Testis (tissue), 5 donors: ENCODE measurements at regions of chr6 and their contacts with region 1.

Region 1: DNA sequence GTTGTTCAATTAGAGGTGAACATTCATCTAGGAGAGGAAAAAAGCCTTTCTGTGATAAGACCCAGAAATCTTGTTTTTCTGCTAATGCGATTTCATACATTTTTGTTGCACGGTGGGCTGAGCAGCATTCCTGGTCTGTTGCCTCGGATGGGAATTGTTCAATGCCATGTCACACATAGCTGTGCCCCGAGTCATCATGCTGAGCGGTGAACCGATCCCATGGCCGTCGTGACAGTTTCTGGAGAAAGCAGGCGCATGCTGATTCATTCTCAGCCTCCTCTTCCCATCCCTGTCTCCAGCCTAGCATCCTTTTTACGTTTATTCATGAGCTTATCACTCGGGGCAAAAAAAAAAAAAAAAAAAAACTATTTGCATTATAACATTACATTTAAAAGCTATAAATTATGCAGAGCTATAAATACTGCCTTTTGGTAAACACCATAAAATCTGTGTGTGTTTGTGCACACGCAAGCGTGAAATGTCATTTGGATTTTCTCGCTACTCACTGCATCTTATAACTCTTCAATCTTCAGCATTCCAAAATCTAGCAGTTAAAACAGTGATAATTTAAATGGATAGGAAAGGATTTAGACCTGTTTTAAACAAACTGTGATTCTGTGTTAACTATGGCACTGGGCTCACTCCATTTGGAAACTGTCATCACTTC is 58.9 kb upstream of the IFNGR1 start:
- DNase-seq: no peak
- H3K4me3 ChIP-seq: no peak overlapping the region
- H3K27ac ChIP-seq: no peak overlapping the region
- H3K4me1 ChIP-seq: no peaks in the 10 kb centered on the region
- H3K27me3 ChIP-seq: no peaks in the 10 kb centered on the region
- CTCF ChIP-seq: no peak
- POLR2A ChIP-seq: no peak

Region 2: GRCh38 chr6:137188855-137189254 is 89.2 kb before region 1 on chr6:
- intact Hi-C with region 1: loop called (anchors 5 kb)
- DNase-seq: no peak
- H3K4me3 ChIP-seq: no peak overlapping the region
- H3K27ac ChIP-seq: no peak overlapping the region
- H3K4me1 ChIP-seq: peaks cover 4% of the 10 kb centered on the region
- H3K27me3 ChIP-seq: no peaks in the 10 kb centered on the region
- CTCF ChIP-seq: no peak
- POLR2A ChIP-seq: no peak

Region 3: GRCh38 chr6:137432054-137432611 is 154.0 kb after region 1 on chr6:
- intact Hi-C with region 1: no loop called
- DNase-seq: no peak
- H3K4me3 ChIP-seq: no peak overlapping the region
- H3K27ac ChIP-seq: no peak overlapping the region
- H3K4me1 ChIP-seq: no peaks in the 10 kb centered on the region
- H3K27me3 ChIP-seq: no peaks in the 10 kb centered on the region
- CTCF ChIP-seq: no peak
- POLR2A ChIP-seq: no peak